SK-N-SH (cell line): ENCODE measurements at regions of chrX and their contacts with region 1.

Region 1: GRCh38 chrX:109856974-109857373 is 123.9 kb upstream of the ACSL4 start:
- DNase-seq: peak; percentile 19
- H3K4me3 ChIP-seq: no peak overlapping the region; a peak in 1 of 4 replicates
- H3K27ac ChIP-seq: no peak overlapping the region
- H3K4me1 ChIP-seq: 0 out of 4 replicates have a peak, but pooled peaks cover 0 to 6% of the 10 kb centered on the region in 2 experiments
- H3K27me3 ChIP-seq: no peaks in the 10 kb centered on the region
- CTCF ChIP-seq: peak; percentile 94
- EP300 ChIP-seq: no peak
- RAD21 ChIP-seq: peak; percentile 73

Region 2: DNA sequence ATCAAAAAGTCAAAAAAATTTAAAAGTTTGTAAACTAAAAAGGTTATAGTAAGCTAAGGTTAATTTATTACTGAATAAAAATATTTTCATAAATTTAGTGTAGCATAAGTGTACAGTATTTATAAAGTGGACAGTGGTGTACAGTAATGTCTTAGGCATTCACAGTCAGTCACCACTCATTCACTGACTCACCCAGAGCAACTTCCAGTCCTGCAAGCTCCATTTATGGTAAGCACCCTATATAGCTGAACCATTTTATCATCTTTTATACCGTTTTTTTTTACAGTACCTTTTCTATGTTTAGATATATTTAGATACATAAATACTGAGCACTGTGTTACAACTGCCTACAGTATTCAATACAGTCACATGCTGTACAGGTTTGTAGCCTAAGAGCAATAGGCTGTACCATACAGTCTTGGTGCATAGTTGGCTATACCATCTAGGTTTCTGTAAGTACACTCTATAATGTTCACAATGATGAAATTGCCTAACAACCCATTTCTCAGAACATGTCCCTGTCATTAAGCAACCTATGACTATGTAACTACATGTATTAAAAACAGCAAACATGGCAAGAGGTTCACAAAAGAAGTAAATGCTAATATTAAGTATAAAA is 142.5 kb before region 1 on chrX:
- CTCF ChIA-PET with region 1: interaction called, 105 read pairs
- POLR2A ChIA-PET with region 1: no interaction called
- DNase-seq: no peak
- H3K4me3 ChIP-seq: no peak overlapping the region
- H3K27ac ChIP-seq: peak overlapping the region in 1 of 2 experiments; percentile 73; a peak in 2 of 4 replicates
- H3K4me1 ChIP-seq: peaks cover 0 to 13% of the 10 kb centered on the region in 2 experiments; a peak in 1 of 4 replicates
- H3K27me3 ChIP-seq: peaks cover 4% of the 10 kb centered on the region; the same call in 1 of the 2 replicates
- CTCF ChIP-seq: no peak
- EP300 ChIP-seq: peak in 1 of 2 experiments; percentile 44; a peak in 1 of 4 replicates
- RAD21 ChIP-seq: no peak

Region 3: GRCh38 chrX:109826954-109827708 is 29.8 kb before region 1 on chrX:
- CTCF ChIA-PET with region 1: interaction called, 10 read pairs
- POLR2A ChIA-PET with region 1: no interaction called
- DNase-seq: no peak
- H3K4me3 ChIP-seq: no peak overlapping the region
- H3K27ac ChIP-seq: no peak overlapping the region
- H3K4me1 ChIP-seq: no peaks in the 10 kb centered on the region
- H3K27me3 ChIP-seq: no peaks in the 10 kb centered on the region; the same call in 1 of the 2 replicates
- CTCF ChIP-seq: peak; percentile 25; the same call in 1 of the 2 replicates
- EP300 ChIP-seq: no peak
- RAD21 ChIP-seq: no peak

Region 4: GRCh38 chrX:109872021-109872732 is 15.2 kb after region 1 on chrX:
- CTCF ChIA-PET with region 1: interaction called, 16 read pairs
- POLR2A ChIA-PET with region 1: no interaction called
- DNase-seq: no peak
- H3K4me3 ChIP-seq: no peak overlapping the region
- H3K27ac ChIP-seq: no peak overlapping the region
- H3K4me1 ChIP-seq: no peaks in the 10 kb centered on the region
- H3K27me3 ChIP-seq: no peaks in the 10 kb centered on the region; the same call in 1 of the 2 replicates
- CTCF ChIP-seq: no peak
- EP300 ChIP-seq: no peak
- RAD21 ChIP-seq: no peak

Region 5: GRCh38 chrX:109890895-109891502 is 34.0 kb after region 1 on chrX:
- CTCF ChIA-PET with region 1: interaction called, 16 read pairs
- POLR2A ChIA-PET with region 1: no interaction called
- DNase-seq: peak; percentile 65
- H3K4me3 ChIP-seq: peak overlapping the region in 1 of 2 experiments; percentile 30; a peak in 1 of 4 replicates
- H3K27ac ChIP-seq: no peak overlapping the region
- H3K4me1 ChIP-seq: no peaks in the 10 kb centered on the region; a peak in 1 of 4 replicates
- H3K27me3 ChIP-seq: no peaks in the 10 kb centered on the region
- CTCF ChIP-seq: peak; percentile 90
- EP300 ChIP-seq: no peak
- RAD21 ChIP-seq: peak; percentile 59

Region 6: DNA sequence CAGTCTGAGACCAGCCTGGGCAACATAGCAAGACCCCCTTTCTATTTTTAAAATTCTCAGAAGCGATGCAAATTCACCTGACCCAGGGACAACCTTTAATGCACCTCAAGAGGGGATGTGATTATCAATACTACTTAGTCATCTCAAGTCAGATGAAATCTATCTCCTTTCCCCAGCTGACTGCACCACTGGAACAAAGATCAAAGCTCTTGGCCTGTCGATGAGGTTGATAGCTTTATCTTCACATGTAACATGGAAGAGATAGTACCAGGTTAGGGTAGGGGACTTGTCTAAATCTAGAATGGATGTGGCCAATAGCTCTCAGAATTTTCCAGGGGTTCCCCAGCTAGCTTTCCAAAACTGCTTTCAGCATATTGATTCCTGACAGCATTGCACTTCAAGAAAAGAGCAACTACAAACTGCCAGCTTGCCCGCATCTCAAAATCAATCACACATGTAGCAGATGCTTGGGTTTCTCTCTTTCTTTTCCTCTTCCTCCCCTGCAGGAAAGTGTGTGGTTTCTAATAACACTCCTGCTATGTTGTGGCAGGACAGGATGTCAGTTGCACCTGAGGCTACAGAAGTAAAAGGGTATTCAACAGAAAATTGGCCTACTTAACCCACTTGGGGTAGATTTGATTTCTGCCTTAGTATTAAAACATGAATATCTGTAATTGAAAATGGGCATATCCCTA is 133.8 kb after region 1 on chrX:
- CTCF ChIA-PET with region 1: no interaction called
- POLR2A ChIA-PET with region 1: no interaction called
- DNase-seq: no peak
- H3K4me3 ChIP-seq: no peak overlapping the region
- H3K27ac ChIP-seq: no peak overlapping the region
- H3K4me1 ChIP-seq: no peaks in the 10 kb centered on the region
- H3K27me3 ChIP-seq: peaks cover 4% of the 10 kb centered on the region; the same call in 1 of the 2 replicates
- CTCF ChIP-seq: no peak
- EP300 ChIP-seq: no peak
- RAD21 ChIP-seq: no peak